ENCODE measurements at regions of chr2 and their contacts with region 1.

Region 1: DNA sequence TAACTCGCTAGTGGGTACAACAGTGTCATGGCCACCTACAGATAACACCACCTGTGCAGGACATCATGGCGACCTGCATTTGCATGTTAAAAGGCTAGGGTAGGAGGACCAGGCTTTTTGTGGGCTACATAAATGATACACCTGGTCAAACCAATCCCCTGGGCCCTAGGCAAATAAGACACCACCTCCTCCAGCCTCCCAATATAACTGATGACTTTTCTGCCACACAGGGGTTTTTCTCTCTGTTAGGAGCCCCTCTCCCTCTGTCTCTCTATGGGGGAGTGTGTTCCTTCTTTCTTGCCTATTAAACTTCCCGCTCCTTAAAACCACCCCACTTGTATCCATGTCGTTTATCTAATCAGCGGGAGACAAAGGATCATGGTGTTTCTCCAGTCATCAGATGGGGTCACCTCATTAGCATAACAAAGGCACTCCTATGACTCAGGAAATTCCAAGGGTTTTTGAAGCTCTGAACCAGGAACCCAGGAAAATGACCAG is 10.8 kb upstream of the BUB1 start:
- DNase-seq: no peak
- ATAC-seq: no peak
- H3K4me3 ChIP-seq: no peak overlapping the region
- H3K27ac ChIP-seq: no peak overlapping the region
- H3K4me1 ChIP-seq: no peaks in the 10 kb centered on the region
- H3K27me3 ChIP-seq: no peaks in the 10 kb centered on the region
- CTCF ChIP-seq: no peak

Region 2: GRCh38 chr2:110770959-110771431 is 82.4 kb after region 1 on chr2:
- CTCF ChIA-PET with region 1: no interaction called
- POLR2A ChIA-PET with region 1: no interaction called
- in situ Hi-C with region 1: no loop called
- intact Hi-C with region 1: no loop called
- DNase-seq: no peak
- ATAC-seq: peak; percentile 56
- H3K4me3 ChIP-seq: no peak overlapping the region
- H3K27ac ChIP-seq: no peak overlapping the region
- H3K4me1 ChIP-seq: 0 out of 2 replicates have a peak, but pooled peaks cover 3% of the 10 kb centered on the region
- H3K27me3 ChIP-seq: no peaks in the 10 kb centered on the region; the same call in 1 of the 2 replicates
- CTCF ChIP-seq: no peak

Region 3: GRCh38 chr2:110804915-110805314 is 116.3 kb after region 1 on chr2:
- CTCF ChIA-PET with region 1: interaction called, 10 read pairs
- POLR2A ChIA-PET with region 1: no interaction called
- in situ Hi-C with region 1: no loop called
- intact Hi-C with region 1: no loop called
- DNase-seq: no peak
- ATAC-seq: no peak
- H3K4me3 ChIP-seq: no peak overlapping the region
- H3K27ac ChIP-seq: no peak overlapping the region
- H3K4me1 ChIP-seq: no peaks in the 10 kb centered on the region
- H3K27me3 ChIP-seq: peaks cover 4% of the 10 kb centered on the region; the same call in 1 of the 2 replicates
- CTCF ChIP-seq: no peak

Measured in Panc1 (cell line).